Left ventricle myocardium inferior (tissue), 1 donor: ENCODE measurements at regions of chr10 and their contacts with region 1.

Region 1: DNA sequence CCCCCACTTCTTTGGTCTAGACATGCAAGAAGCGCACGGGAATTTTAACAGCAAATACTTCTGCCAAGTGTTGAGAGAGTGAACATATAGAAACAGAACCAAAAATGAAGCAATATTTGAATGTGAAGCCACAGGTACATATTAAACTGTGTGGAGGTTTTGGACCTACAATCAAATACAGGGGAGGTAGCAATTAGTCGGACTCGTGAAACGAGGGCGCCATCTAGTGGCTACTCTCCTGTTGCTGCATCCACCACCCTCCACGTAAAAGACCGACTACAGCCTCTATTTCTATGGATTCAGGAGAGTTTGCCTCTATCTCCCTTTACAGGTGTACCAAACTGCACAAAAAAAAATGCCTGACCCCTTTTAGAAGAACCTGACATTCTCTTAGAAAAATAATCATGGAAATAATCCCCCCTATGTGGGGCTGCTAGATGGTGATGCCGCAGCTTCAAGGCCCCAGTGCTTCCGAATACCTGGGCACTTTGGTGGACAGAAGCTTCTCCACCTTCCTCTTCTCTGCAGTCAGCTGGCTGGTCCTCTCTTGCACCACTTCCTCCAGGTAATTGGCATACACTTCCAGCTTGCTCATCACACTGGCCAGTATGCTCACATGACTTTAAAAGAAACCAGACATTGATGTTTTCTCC is 31.7 kb downstream of the TECTB start:
- DNase-seq: peak; percentile 70
- H3K4me3 ChIP-seq: no peak overlapping the region
- H3K27ac ChIP-seq: no peak overlapping the region
- H3K4me1 ChIP-seq: no peaks in the 10 kb centered on the region
- H3K27me3 ChIP-seq: peaks cover 9% of the 10 kb centered on the region
- CTCF ChIP-seq: peak; percentile 94

Region 2: GRCh38 chr10:112183329-112184051 is 131.5 kb before region 1 on chr10 and contains the start of gene GPAM:
- intact Hi-C with region 1: loop called (anchors 10 kb)
- DNase-seq: peak; percentile 96
- H3K4me3 ChIP-seq: peak within 1 kb of the TSS; percentile 90
- H3K27ac ChIP-seq: peak within 1 kb of the TSS; percentile 86
- H3K4me1 ChIP-seq: peaks cover 41% of the 10 kb centered on the region
- H3K27me3 ChIP-seq: no peaks in the 10 kb centered on the region
- CTCF ChIP-seq: no peak
- total RNA-seq, gene GPAM: 22.2 TPM

Region 3: GRCh38 chr10:112202561-112203241 is 112.2 kb before region 1 on chr10:
- intact Hi-C with region 1: no loop called
- DNase-seq: no peak
- H3K4me3 ChIP-seq: no peak overlapping the region
- H3K27ac ChIP-seq: no peak overlapping the region
- H3K4me1 ChIP-seq: peaks cover 17% of the 10 kb centered on the region
- H3K27me3 ChIP-seq: no peaks in the 10 kb centered on the region
- CTCF ChIP-seq: no peak